ENCODE measurements at regions of chr7 and their contacts with region 1.

Region 1: DNA sequence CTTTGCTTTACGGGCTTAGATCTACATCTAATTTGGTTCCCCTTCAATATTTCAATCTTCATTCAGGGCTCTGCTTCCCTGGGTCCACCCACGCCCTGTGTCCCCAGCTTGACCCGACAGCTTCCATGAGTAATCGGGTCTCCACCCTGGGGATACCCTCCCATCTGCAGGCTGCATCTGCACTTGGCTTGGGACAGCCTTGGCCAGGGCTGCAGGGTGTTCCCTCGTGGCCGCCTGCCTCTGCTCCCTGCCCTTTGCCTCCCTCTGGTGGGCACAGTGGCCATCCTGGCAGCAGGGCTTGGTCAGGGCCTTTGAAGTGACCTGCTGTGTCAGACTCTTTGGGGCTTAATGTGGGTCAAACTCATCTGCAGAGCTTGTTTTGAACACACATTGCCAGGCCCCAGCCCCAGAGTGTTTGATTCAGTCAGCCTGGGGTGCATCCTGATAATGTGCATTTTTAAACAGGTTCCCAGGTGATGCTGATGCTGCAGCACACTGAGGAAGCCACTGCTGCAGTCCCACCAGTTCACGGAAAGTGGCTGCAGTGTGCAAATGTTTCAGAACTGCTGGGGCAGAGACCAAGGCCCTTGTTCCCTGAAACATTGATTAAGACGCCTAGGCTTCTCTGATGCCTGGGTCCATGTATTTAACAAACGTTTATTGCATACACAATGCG is 80.7 kb upstream of the SEC61G start:
- DNase-seq: peak; percentile 88
- ATAC-seq: peak; percentile 91

Region 2: DNA sequence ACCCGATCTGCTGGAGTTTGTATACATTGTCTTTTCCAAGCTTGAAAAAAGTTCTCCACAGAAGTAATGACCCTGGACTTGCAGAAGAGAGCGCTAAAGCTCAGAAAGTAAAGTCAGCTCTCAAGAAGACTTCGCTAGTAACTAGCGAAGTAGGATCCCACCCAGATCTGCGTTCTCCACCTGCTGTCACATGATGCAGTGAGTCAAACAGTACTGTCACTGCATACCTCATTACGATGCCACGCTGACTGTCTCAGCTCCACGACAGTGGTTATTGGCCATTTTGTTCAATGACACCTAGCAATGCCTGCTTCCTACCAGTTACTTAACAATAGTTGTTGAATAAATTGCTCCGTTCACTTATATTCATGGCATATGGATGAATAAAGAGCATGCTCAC is 51.0 kb before region 1 on chr7:
- intact Hi-C with region 1: loop called (anchors 10 kb)
- DNase-seq: no peak
- ATAC-seq: peak; percentile 82

Region 3: DNA sequence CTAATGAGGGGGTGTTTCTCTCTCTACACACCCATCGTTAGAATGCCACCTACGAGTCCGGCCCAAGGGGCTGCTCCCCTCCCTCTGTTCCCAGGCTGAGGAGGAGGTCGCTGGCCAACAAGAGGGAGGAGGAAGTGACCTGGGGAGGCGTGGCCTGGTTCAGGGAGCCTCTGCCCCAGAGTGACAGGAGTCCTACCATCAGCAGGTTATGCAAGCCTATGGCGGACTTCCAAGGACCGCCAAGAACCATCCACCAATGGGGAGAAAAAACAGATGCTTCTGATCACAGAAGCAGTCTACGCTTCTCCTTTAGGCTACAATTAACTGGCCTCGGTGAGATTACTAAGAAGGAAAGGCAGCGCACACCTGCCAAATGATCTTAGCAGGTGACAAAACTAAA is 166.9 kb after region 1 on chr7:
- intact Hi-C with region 1: no loop called
- DNase-seq: no peak
- ATAC-seq: no peak

Region 4: DNA sequence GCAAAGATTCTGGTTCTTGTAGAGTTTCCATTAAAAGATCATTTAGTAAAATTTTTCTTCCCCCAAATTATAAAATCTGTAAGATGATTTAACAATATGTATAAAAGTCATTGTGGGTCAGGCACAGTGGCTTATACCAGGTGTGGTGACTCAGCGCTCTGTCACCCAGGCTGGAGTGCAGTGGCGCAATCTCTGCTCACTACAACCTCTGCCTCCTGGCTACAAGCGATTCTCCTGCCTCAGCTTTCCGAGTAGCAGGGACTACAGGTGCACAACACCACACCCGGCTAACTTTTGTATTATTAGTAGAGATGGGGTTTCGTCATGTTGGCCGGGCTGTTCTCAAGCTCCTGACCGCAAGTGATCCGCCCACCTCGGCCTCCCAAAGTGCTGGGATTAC is 954.9 kb after region 1 on chr7:
- intact Hi-C with region 1: no loop called
- DNase-seq: no peak
- ATAC-seq: no peak

Measured in Right ventricle myocardium superior (tissue), 1 donor.